HAP-1 (cell line): ENCODE measurements at regions of chr6 and their contacts with region 1.

Region 1: GRCh38 chr6:27081931-27082330 is 165.6 kb upstream of the PRSS16 start:
- DNase-seq: no peak
- H3K4me3 ChIP-seq: no peak overlapping the region
- H3K4me1 ChIP-seq: no peaks in the 10 kb centered on the region
- H3K27me3 ChIP-seq: peaks cover 9% of the 10 kb centered on the region; the same call in 1 of the 2 replicates

Region 2: GRCh38 chr6:26478985-26479278 is 603.0 kb before region 1 on chr6:
- in situ Hi-C with region 1: no loop called
- DNase-seq: no peak
- H3K4me3 ChIP-seq: no peak overlapping the region
- H3K4me1 ChIP-seq: peaks cover 13% of the 10 kb centered on the region
- H3K27me3 ChIP-seq: no peaks in the 10 kb centered on the region

Region 3: DNA sequence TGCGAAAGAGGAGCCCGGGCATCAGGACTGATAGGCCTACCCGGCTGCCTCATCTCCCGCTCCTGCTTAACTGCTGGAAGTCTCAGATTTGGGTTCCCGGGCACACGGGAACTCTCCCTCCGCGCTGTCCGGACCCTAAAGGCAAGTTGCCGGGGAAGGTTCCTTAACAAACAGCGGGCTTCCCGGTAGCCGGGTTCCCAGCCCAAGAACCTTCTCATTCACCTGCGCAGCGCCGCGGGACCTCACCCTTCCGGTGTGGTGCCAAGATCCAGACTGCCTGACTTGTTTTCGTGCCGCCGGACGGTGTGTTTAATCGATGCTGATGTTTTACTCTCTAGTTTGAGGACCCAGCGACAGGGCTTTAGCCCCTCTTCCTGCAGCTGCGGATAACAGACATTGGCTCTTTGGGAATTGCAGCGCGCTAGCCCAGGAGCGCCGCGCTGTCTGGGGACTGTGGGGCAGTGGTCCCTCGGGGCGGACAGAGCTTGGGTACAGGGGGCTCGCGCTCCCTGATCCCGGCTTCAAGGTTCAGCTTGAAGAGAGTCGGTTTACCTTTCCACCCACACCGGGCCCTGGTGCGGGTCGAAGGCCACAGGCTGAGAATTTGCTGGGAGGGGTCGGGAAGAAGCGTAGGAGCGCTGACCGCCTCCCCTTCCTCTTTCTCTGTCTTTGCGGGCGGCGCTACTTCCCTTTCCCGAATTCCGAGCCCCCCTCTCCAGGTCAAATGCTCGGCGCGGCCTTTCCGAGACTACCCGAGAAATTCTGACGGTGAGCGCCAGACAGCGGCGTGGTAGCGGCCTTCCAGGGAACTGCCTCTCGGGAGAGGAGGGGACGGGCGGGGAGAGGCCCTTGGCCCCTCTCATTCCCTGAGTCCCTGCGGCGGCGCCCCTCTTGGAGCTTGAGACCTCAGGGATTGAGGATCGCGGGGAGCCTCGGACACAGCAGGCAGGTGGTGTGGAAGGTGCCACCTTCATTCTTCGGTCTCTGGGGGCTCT is 467.9 kb before region 1 on chr6:
- in situ Hi-C with region 1: loop called (anchors 10 kb)
- DNase-seq: no peak
- H3K4me3 ChIP-seq: no peak overlapping the region
- H3K4me1 ChIP-seq: no peaks in the 10 kb centered on the region
- H3K27me3 ChIP-seq: no peaks in the 10 kb centered on the region